ENCODE measurements at regions of chr1 and their contacts with region 1.

Region 1: DNA sequence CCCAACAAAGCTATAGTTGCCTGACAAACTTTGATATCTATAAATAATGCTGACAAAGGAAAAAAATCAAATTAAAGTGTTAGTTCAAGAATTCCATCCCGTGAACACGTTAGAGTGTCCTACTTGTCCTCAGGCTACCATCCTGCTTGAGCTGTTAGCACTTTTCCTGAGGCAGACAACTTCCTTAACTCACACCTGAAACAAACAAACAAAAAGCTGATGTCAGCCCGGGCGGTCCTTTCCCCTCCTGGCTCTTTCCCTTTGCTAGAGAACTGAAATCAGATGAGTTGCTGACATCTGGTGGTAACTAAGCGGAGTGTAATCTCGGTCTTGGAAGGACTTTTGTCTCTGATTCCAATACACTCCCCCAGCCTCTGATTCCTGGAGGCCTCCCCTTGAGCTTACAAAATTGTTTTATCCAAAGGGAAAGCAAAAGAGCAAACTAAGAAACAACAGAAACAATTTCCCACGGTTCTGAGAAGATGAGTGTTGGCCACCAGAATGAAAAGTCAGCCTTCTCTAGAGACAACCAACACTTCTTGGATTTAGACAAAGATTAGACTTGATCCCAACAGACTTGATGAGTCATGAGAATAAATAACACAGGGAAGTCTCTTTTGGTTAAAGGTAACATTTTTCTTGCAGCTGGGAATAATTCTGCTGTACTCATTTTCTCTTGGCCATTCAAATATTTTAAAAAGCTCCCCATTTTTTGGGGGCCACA is 135.4 kb downstream of the PROX1 start:
- DNase-seq: peak; percentile 78
- H3K4me3 Mint-ChIP-seq: no peak overlapping the region
- H3K27ac Mint-ChIP-seq: no peak overlapping the region
- H3K4me1 Mint-ChIP-seq: peaks cover 6% of the 10 kb centered on the region
- H3K27me3 Mint-ChIP-seq: no peaks in the 10 kb centered on the region
- CTCF ChIP-seq: peak; percentile 95

Region 2: GRCh38 chr1:213135572-213135971 is 987.7 kb before region 1 on chr1:
- CTCF ChIA-PET with region 1: interaction called, 10 read pairs
- POLR2A ChIA-PET with region 1: no interaction called
- intact Hi-C with region 1: loop called (anchors 1 kb)
- DNase-seq: no peak
- H3K4me3 Mint-ChIP-seq: no peak overlapping the region
- H3K27ac Mint-ChIP-seq: no peak overlapping the region
- H3K4me1 Mint-ChIP-seq: no peaks in the 10 kb centered on the region
- H3K27me3 Mint-ChIP-seq: no peaks in the 10 kb centered on the region
- CTCF ChIP-seq: no peak

Region 3: GRCh38 chr1:213357403-213357802 is 765.8 kb before region 1 on chr1:
- CTCF ChIA-PET with region 1: interaction called, 11 read pairs
- POLR2A ChIA-PET with region 1: no interaction called
- intact Hi-C with region 1: no loop called
- DNase-seq: no peak
- H3K4me3 Mint-ChIP-seq: no peak overlapping the region
- H3K27ac Mint-ChIP-seq: no peak overlapping the region
- H3K4me1 Mint-ChIP-seq: no peaks in the 10 kb centered on the region
- H3K27me3 Mint-ChIP-seq: peaks cover 23% of the 10 kb centered on the region
- CTCF ChIP-seq: no peak

Region 4: DNA sequence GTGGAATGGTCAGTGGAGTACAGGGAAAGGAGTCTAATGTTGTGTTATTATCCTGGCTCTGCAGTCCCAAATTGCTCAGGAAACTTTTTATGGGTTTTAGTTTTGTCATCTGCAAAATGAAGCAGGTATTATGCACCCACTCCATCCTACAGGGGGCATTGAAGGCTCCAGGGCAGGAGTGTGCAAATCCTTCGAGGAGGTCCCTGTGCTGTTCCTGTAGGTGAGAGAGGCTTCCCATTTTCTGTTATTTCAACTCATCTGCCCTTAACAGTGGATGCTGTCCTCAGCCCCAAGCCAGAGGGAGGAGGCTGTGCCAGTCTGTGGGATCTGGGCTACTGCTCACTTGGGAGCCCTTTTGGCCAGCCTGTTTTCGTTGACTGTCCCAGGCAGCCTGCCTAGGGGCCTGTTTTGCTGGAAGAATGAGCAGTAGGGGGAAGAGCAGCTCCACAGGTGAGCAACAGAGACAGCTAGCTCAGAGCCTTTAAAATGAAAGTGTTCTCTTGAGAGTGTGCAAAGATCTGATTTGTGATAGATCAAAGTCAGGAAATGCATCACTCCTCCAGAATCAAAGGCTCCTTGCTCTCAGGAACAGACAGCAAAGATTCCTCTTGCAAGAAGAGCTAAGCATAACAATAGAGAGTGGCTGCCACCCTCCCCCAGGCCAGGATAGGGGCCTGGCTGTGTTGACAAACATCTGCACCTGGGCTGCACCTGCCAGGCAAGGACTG is 453.1 kb before region 1 on chr1:
- CTCF ChIA-PET with region 1: interaction called, 3 read pairs
- POLR2A ChIA-PET with region 1: no interaction called
- intact Hi-C with region 1: loop called (anchors 10 kb)
- DNase-seq: no peak
- H3K4me3 Mint-ChIP-seq: no peak overlapping the region
- H3K27ac Mint-ChIP-seq: no peak overlapping the region
- H3K4me1 Mint-ChIP-seq: no peaks in the 10 kb centered on the region
- H3K27me3 Mint-ChIP-seq: peaks cover 27% of the 10 kb centered on the region
- CTCF ChIP-seq: no peak

Region 5: GRCh38 chr1:213987927-213988506 is 135.2 kb before region 1 on chr1 and contains the start of gene PROX1:
- CTCF ChIA-PET with region 1: interaction called, 10 read pairs
- POLR2A ChIA-PET with region 1: no interaction called
- intact Hi-C with region 1: loop called (anchors 2 kb)
- DNase-seq: peak; percentile 86
- H3K4me3 Mint-ChIP-seq: peak within 1 kb of the TSS; percentile 92
- H3K27ac Mint-ChIP-seq: peak within 1 kb of the TSS; percentile 88
- H3K4me1 Mint-ChIP-seq: peaks cover 15% of the 10 kb centered on the region
- H3K27me3 Mint-ChIP-seq: peaks cover 97% of the 10 kb centered on the region
- CTCF ChIP-seq: no peak
- total RNA-seq, gene PROX1: 0.61 TPM in 2 replicates

Region 6: DNA sequence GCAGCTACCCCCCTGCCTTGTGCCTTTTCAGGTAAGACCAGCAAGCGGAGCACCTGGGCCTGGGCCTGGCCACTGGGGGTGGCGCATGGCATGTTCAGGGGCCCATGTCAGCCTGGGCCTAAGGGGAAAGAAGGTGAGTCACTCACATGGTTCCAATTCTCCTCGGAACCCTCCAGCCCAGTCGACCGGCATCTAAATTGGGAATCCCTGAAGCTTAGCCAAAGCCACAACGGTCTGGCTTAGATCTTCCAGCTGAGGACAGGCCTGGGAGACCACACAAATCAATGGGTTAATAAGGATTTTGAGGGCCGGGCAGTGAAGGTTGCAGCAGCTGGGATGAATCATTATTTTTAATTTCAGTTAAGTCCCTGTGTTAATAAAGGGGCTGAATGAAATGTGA is 12.7 kb after region 1 on chr1:
- CTCF ChIA-PET with region 1: interaction called, 18 read pairs
- POLR2A ChIA-PET with region 1: no interaction called
- intact Hi-C with region 1: no loop called
- DNase-seq: no peak
- H3K4me3 Mint-ChIP-seq: no peak overlapping the region
- H3K27ac Mint-ChIP-seq: no peak overlapping the region
- H3K4me1 Mint-ChIP-seq: no peaks in the 10 kb centered on the region
- H3K27me3 Mint-ChIP-seq: peaks cover 41% of the 10 kb centered on the region
- CTCF ChIP-seq: no peak

Region 7: GRCh38 chr1:214248311-214249085 is 125.3 kb after region 1 on chr1:
- CTCF ChIA-PET with region 1: no interaction called
- POLR2A ChIA-PET with region 1: no interaction called
- intact Hi-C with region 1: no loop called
- DNase-seq: no peak
- H3K4me3 Mint-ChIP-seq: no peak overlapping the region
- H3K27ac Mint-ChIP-seq: no peak overlapping the region
- H3K4me1 Mint-ChIP-seq: peaks cover 6% of the 10 kb centered on the region
- H3K27me3 Mint-ChIP-seq: peaks cover 48% of the 10 kb centered on the region
- CTCF ChIP-seq: no peak

Measured in MCF 10A (cell line).